Activated CD4-positive, alpha-beta memory T cell treated with anti-CD3 and anti-CD28 coated beads, Interleukin-2, amount 10 ng/mL, durations not matched to agents 7 days and 5 days (primary cell): ENCODE measurements at regions of chr19 and their contacts with region 1.

Region 1: DNA sequence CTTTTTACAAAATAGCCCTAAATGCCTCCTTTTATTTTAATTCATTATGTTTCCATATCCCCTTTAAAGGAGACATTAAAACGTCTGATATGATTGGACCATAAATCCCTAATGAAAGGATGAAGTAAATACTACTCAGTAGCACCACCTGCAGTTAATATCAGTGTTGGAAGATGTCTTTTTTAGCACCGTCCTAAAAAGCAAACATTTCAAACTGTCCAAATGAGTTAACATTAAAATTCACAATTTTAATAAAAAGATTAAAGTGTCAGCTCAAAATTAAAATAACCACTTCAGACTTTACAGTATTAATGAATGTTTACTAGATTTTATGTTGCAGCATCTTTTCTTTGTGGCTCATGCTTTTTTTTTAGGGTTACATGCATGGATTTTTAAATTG is 12.3 kb downstream of the ZNF507 start:
- DNase-seq: no peak
- H3K4me3 Mint-ChIP-seq: no peak overlapping the region
- H3K27ac Mint-ChIP-seq: no peak overlapping the region
- H3K4me1 Mint-ChIP-seq: peaks cover 22% of the 10 kb centered on the region
- H3K27me3 Mint-ChIP-seq: no peaks in the 10 kb centered on the region

Region 2: DNA sequence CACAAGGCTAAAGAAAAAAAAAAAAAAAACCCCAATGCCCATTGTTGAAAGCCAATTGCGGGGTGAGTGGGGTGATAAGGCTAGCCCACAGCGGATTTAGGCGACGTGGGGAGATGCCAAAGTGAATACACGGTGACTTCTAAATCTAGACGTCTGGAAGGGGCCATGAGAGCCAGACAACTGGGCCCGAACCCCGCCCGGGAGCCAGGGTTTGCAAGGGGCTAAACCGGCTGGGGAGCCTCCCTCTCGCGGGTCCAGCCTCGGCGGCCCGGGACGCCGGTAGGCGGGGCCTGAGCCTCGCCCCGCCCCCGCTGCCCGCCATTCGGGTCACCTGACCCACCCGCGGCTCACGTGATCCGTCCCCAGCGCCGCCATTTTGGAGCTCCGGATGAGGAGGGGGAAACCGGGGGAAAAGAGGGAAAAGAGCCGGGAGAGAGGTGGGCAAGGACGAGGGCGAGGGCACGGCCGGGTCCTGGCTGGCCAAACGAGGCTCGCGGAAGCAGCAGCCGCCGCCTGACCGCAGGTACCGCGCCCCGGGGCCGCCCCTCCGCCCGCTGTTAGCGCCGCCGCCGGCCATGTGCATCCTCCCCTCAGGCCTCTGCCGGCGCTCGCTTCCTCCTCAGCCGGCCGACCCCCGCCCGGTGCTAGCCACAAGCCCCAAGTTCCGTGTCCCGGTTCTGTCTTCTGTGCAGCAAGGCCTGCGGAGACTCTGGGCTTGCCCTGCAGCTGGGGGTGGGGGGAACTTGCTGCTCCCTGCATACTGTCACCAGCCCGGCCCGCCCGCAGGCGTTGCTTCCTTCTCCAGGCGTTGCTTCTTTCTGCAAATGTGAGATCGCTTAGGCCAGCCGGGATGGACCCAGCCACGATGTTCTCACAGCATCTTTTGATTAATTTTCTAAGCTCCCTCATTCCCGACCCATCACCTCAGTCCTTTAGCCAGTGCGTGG is 12.2 kb before region 1 on chr19 and contains the start of gene ZNF507:
- CTCF ChIA-PET with region 1: interaction called, 12 read pairs
- POLR2A ChIA-PET with region 1: interaction called, 13 read pairs
- DNase-seq: peak; percentile 88
- H3K4me3 Mint-ChIP-seq: peak within 1 kb of the TSS; percentile 98
- H3K27ac Mint-ChIP-seq: peak within 1 kb of the TSS; percentile 90
- H3K4me1 Mint-ChIP-seq: peaks cover 41% of the 10 kb centered on the region
- H3K27me3 Mint-ChIP-seq: peaks cover 10% of the 10 kb centered on the region
- total RNA-seq, gene ZNF507: 23.4 to 23.7 TPM

Region 3: GRCh38 chr19:32380269-32380668 is 22.5 kb after region 1 on chr19:
- CTCF ChIA-PET with region 1: no interaction called
- POLR2A ChIA-PET with region 1: no interaction called
- DNase-seq: no peak
- H3K4me3 Mint-ChIP-seq: no peak overlapping the region
- H3K27ac Mint-ChIP-seq: no peak overlapping the region
- H3K4me1 Mint-ChIP-seq: peaks cover 10% of the 10 kb centered on the region
- H3K27me3 Mint-ChIP-seq: no peaks in the 10 kb centered on the region

Region 4: GRCh38 chr19:32397526-32398135 is 39.9 kb after region 1 on chr19:
- CTCF ChIA-PET with region 1: no interaction called
- POLR2A ChIA-PET with region 1: no interaction called
- DNase-seq: no peak
- H3K4me3 Mint-ChIP-seq: no peak overlapping the region
- H3K27ac Mint-ChIP-seq: no peak overlapping the region
- H3K4me1 Mint-ChIP-seq: peaks cover 1% of the 10 kb centered on the region
- H3K27me3 Mint-ChIP-seq: no peaks in the 10 kb centered on the region